SK-N-SH (cell line): ENCODE measurements at regions of chr17 and their contacts with region 1.

Region 1: GRCh38 chr17:7561028-7561575 is 617 bp upstream of the SENP3 start:
- DNase-seq: peak; percentile 93
- H3K4me3 ChIP-seq: peak overlapping the region; percentile 88 to 90
- H3K27ac ChIP-seq: peak overlapping the region; percentile 85 to 88
- H3K4me1 ChIP-seq: peaks cover 17 to 54% of the 10 kb centered on the region in 2 experiments
- H3K27me3 ChIP-seq: no peaks in the 10 kb centered on the region
- CTCF ChIP-seq: peak; percentile 73
- EP300 ChIP-seq: no peak
- RAD21 ChIP-seq: peak; percentile 84

Region 2: DNA sequence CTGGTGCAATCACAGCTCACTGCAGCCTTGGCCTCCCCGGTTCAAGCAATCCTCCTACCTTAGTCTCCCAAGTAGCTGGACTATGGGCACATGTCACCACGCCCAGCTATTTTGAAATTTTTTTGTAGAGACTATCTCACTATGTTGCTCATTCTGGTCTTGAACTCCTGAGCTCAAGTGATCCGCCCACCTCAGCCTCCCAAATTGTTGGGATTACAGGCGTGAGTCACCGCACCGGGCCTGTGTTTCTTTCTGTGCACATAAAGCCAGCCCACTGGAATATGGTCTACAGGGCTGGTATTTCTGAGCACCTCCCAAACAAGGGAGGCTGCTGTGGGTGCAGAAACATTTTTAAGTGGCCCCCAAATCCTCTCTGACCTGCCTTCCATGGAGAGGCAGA is 197.8 kb before region 1 on chr17:
- CTCF ChIA-PET with region 1: interaction called, 13 read pairs
- POLR2A ChIA-PET with region 1: no interaction called
- DNase-seq: no peak
- H3K4me3 ChIP-seq: no peak overlapping the region
- H3K27ac ChIP-seq: no peak overlapping the region
- H3K4me1 ChIP-seq: no peaks in the 10 kb centered on the region
- H3K27me3 ChIP-seq: no peaks in the 10 kb centered on the region
- CTCF ChIP-seq: no peak
- EP300 ChIP-seq: no peak
- RAD21 ChIP-seq: no peak

Region 3: DNA sequence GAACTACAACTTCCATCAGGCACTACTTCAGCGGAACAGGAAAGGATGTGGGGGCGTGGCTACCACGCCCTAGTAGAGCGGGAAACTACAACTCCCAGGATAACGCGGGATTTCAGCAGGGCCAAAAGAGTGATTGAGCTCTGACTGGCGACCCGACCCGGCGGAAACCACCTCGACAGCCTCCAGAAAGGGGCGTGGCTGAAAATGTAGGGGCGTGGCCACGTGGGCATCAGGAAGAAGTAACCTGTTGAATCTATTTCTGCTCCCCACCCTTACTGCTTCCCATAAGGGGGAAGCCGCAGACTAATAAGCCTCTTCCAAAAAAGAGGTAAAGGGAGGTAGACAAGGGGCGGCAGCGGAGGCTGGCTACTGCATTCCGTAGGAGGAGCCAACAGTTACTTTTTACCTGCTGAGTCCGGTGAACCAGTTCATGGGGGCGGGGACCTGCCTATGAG is 125.9 kb before region 1 on chr17 and contains the start of gene TMEM102:
- CTCF ChIA-PET with region 1: interaction called, 20 read pairs
- POLR2A ChIA-PET with region 1: interaction called, 5 read pairs
- DNase-seq: peak; percentile 95
- H3K4me3 ChIP-seq: peak within 1 kb of the TSS; percentile 67 to 86
- H3K27ac ChIP-seq: peak within 1 kb of the TSS in 1 of 2 experiments; percentile 55; a peak in 1 of 4 replicates
- H3K4me1 ChIP-seq: peaks cover 0 to 16% of the 10 kb centered on the region in 2 experiments; a peak in 1 of 4 replicates
- H3K27me3 ChIP-seq: no peaks in the 10 kb centered on the region
- CTCF ChIP-seq: no peak
- EP300 ChIP-seq: no peak
- RAD21 ChIP-seq: no peak
- polyA plus RNA-seq, gene TMEM102: 6.5 and 6.6 TPM in 2 replicates

Region 4: GRCh38 chr17:7484067-7484918 is 76.8 kb before region 1 on chr17 and contains the start of gene POLR2A:
- CTCF ChIA-PET with region 1: interaction called, 11 read pairs
- POLR2A ChIA-PET with region 1: no interaction called
- DNase-seq: peak; percentile 98
- H3K4me3 ChIP-seq: peak within 1 kb of the TSS; percentile 85 to 100
- H3K27ac ChIP-seq: peak within 1 kb of the TSS; percentile 99
- H3K4me1 ChIP-seq: peaks cover 31 to 34% of the 10 kb centered on the region in 2 experiments
- H3K27me3 ChIP-seq: no peaks in the 10 kb centered on the region
- CTCF ChIP-seq: no peak
- EP300 ChIP-seq: peak in 1 of 2 experiments; percentile 2; a peak in 2 of 4 replicates
- RAD21 ChIP-seq: 0 out of 2 replicates have a peak, but pooled peaks have one; percentile 13
- polyA plus RNA-seq, gene POLR2A: 19.0 and 37.3 TPM in 2 replicates

Region 5: DNA sequence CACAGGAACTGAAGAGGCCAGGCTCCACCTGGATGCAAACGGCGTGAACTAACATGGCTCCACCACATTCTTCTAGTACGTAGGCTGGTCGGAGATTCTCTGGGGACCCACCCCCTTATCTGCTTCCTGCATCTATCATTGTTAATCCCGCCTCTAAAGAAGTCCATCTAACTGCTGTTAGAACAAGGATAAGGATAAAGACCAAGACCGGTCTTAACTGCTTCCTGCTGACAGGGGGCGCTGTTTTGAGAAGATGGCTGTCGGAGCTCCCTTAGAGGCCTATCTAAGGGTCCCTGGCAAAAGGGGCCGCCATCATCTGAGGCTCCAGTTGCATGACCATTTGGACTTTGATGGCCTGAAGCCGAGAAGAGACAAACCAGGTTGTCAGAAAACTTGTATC is 38.1 kb before region 1 on chr17:
- CTCF ChIA-PET with region 1: interaction called, 17 read pairs
- POLR2A ChIA-PET with region 1: no interaction called
- DNase-seq: no peak
- H3K4me3 ChIP-seq: no peak overlapping the region
- H3K27ac ChIP-seq: no peak overlapping the region
- H3K4me1 ChIP-seq: no peaks in the 10 kb centered on the region
- H3K27me3 ChIP-seq: no peaks in the 10 kb centered on the region; the same call in 1 of the 2 replicates
- CTCF ChIP-seq: peak; percentile 51
- EP300 ChIP-seq: no peak
- RAD21 ChIP-seq: no peak; the same call in 1 of the 2 replicates

Region 6: DNA sequence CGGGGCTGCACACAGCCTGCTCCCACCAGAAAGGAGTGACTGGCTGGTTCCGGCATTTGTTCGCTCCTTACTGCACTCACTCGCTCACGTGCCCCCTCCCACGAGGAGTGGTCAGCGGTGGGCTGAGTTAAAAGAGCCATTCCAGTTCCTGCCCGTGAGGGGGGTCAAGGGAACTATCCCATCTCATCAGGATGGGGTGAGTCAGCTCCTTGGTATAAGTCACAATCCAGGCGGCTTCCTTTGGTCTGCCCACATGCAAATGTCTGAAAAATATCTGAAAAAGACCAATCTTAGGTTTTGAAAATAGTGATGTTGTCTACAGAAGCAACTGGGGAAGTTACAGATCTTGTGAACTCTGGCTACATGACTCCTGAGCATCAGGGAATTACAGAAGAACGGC is 22.2 kb before region 1 on chr17:
- CTCF ChIA-PET with region 1: interaction called, 32 read pairs
- POLR2A ChIA-PET with region 1: no interaction called
- DNase-seq: no peak
- H3K4me3 ChIP-seq: no peak overlapping the region
- H3K27ac ChIP-seq: no peak overlapping the region
- H3K4me1 ChIP-seq: no peaks in the 10 kb centered on the region
- H3K27me3 ChIP-seq: no peaks in the 10 kb centered on the region; the same call in 1 of the 2 replicates
- CTCF ChIP-seq: no peak
- EP300 ChIP-seq: no peak
- RAD21 ChIP-seq: no peak

Region 7: DNA sequence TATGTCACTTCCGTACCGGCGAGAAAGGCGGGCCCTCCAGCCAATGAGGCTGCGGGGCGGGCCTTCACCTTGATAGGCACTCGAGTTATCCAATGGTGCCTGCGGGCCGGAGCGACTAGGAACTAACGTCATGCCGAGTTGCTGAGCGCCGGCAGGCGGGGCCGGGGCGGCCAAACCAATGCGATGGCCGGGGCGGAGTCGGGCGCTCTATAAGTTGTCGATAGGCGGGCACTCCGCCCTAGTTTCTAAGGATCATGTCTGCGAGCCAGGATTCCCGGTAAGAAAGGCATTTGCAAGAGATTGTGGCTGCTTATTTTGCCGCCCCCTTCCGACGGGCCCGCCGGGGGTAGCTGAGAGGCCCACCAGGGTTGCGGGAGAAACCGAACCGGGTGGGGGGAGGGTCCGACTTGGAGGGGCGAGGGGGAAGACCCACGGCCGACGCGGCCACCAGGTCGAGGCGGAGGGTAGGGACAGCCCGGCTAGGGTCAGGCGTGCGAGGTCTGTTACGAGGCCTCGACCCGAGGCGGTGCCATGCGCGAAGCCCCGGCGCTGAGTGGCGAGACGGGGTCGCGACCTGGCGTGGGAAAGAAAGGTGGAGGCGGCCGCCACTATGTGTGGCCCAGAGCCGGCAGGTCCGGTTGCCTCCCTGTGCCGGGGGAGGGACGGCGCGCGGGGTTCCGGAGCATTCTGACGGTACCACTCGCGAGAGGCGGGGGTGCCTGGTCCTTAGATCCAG is 11.7 kb after region 1 on chr17:
- CTCF ChIA-PET with region 1: interaction called, 40 read pairs
- POLR2A ChIA-PET with region 1: interaction called, 5 read pairs
- DNase-seq: peak; percentile 97
- H3K4me3 ChIP-seq: peak overlapping the region; percentile 98 to 100
- H3K27ac ChIP-seq: peak overlapping the region; percentile 92
- H3K4me1 ChIP-seq: peaks cover 16 to 33% of the 10 kb centered on the region in 2 experiments
- H3K27me3 ChIP-seq: no peaks in the 10 kb centered on the region
- CTCF ChIP-seq: no peak
- EP300 ChIP-seq: no peak
- RAD21 ChIP-seq: no peak

Region 8: GRCh38 chr17:7673239-7673638 is 112.1 kb after region 1 on chr17:
- CTCF ChIA-PET with region 1: no interaction called
- POLR2A ChIA-PET with region 1: no interaction called
- DNase-seq: no peak
- H3K4me3 ChIP-seq: no peak overlapping the region; a peak in 1 of 4 replicates
- H3K27ac ChIP-seq: no peak overlapping the region
- H3K4me1 ChIP-seq: no peaks in the 10 kb centered on the region
- H3K27me3 ChIP-seq: no peaks in the 10 kb centered on the region
- CTCF ChIP-seq: peak; percentile 56
- EP300 ChIP-seq: no peak
- RAD21 ChIP-seq: peak; percentile 29; the same call in 1 of the 2 replicates